ENCODE measurements at regions of chr1 and their contacts with region 1.

Region 1: DNA sequence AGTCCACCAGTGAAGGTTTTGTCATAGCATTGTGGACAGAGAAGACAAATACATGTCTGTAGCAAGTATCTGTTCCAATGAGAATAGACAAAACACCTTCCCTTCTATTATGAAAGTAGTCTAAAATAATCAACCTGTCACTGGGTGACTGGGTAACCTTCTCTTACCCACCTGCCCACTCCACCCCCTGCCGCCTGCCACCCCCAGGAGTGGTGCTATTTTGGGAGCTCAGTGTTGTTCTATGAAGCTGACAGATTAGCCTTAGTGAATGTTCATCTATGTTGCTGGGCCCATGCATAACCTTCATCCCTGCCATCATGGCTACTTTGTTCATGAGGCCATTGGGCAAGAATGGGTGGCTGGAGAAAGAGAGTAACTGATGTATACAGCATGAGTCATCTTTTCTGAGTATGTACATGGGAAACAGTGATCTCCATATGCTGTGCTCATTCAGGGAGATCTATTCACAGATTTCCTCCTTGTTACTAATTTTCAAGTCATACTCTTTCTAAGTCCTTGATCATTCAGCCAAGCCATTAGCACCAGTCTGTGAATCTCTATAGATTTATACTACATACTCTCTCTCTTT is 24.8 kb downstream of the MARK1 start:
- DNase-seq: no peak
- H3K4me3 Mint-ChIP-seq: no peak overlapping the region
- H3K27ac Mint-ChIP-seq: no peak overlapping the region
- H3K4me1 Mint-ChIP-seq: no peaks in the 10 kb centered on the region
- H3K27me3 Mint-ChIP-seq: no peaks in the 10 kb centered on the region

Region 2: GRCh38 chr1:220189750-220190347 is 362.9 kb before region 1 on chr1:
- intact Hi-C with region 1: loop called (anchors 10 kb)
- DNase-seq: no peak
- H3K4me3 Mint-ChIP-seq: no peak overlapping the region
- H3K27ac Mint-ChIP-seq: no peak overlapping the region
- H3K4me1 Mint-ChIP-seq: no peaks in the 10 kb centered on the region
- H3K27me3 Mint-ChIP-seq: no peaks in the 10 kb centered on the region

Region 3: DNA sequence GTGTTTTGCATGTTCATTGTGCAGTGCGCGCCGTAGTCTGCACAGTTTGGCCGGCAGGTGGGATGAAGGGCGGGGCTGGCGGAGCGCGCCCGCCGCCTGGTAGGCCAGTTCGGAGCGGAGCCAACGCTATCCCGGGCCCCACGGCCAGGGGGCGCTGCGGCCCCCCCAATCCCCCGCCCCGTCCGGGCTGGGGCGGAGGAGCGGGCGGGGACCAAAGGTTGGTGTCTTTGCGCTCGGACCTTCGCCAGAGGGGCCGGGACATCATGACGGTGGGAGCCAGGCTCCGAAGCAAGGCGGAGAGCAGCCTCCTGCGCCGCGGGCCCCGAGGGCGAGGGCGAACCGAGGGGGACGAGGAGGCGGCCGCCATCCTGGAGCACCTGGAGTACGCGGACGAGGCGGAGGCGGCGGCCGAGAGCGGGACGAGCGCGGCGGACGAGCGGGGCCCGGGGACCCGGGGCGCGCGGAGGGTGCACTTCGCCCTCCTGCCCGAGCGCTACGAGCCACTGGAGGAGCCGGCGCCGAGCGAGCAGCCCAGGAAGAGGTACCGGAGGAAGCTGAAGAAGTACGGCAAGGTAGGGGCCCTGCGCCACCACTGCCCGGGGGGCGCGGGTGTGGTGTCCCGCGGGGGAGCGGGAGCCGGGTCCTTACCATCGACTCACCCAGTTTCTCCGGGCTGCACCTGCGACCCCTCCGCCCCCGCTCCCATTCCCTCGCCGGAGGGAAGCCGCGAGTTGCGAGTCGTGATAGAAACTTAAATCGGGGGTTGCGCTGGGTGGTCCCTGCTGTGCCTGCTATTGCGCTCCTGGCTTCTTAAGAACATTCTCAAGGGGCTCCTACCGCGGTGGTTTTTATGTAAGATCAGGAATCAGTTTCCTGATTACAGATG is 137.6 kb after region 1 on chr1 and contains the start of gene C1orf115:
- intact Hi-C with region 1: no loop called
- DNase-seq: peak; percentile 92
- H3K4me3 Mint-ChIP-seq: peak within 1 kb of the TSS; percentile 86
- H3K27ac Mint-ChIP-seq: peak within 1 kb of the TSS; percentile 23
- H3K4me1 Mint-ChIP-seq: peaks cover 6% of the 10 kb centered on the region
- H3K27me3 Mint-ChIP-seq: peaks cover 23% of the 10 kb centered on the region
- total RNA-seq, gene C1orf115: 0.05 TPM in 1 of 2 replicates, not detected in the other

Measured in activated CD4-positive, alpha-beta T cell treated with anti-CD3 and anti-CD28 coated beads, Interleukin-2, amount 10 ng/mL, durations not matched to agents 24 days and 14 days (primary cell).